ENCODE measurements at regions of chr1 and their contacts with region 1.

Region 1: GRCh38 chr1:221994274-221994698 is 252.4 kb upstream of the DUSP10 start:
- DNase-seq: no peak
- ATAC-seq: no peak
- H3K4me3 ChIP-seq: no peak overlapping the region
- H3K27ac ChIP-seq: no peak overlapping the region
- H3K4me1 ChIP-seq: no peaks in the 10 kb centered on the region
- H3K27me3 ChIP-seq: no peaks in the 10 kb centered on the region
- CTCF ChIP-seq: no peak
- EP300 ChIP-seq: no peak
- POLR2A ChIP-seq: no peak
- RAD21 ChIP-seq: no peak

Region 2: GRCh38 chr1:221478050-221478949 is 516.0 kb before region 1 on chr1:
- CTCF ChIA-PET with region 1: no interaction called
- POLR2A ChIA-PET with region 1: no interaction called
- in situ Hi-C with region 1: no loop called
- intact Hi-C with region 1: loop called (anchors 5 kb)
- DNase-seq: peak; percentile 12
- ATAC-seq: peak; percentile 92
- H3K4me3 ChIP-seq: no peak overlapping the region
- H3K27ac ChIP-seq: no peak overlapping the region
- H3K4me1 ChIP-seq: no peaks in the 10 kb centered on the region
- H3K27me3 ChIP-seq: no peaks in the 10 kb centered on the region
- CTCF ChIP-seq: peak; percentile 80
- EP300 ChIP-seq: no peak
- POLR2A ChIP-seq: no peak
- RAD21 ChIP-seq: peak; percentile 57

Region 3: GRCh38 chr1:222034790-222035189 is 40.5 kb after region 1 on chr1:
- CTCF ChIA-PET with region 1: no interaction called
- POLR2A ChIA-PET with region 1: no interaction called
- in situ Hi-C with region 1: no loop called
- intact Hi-C with region 1: loop called (anchors 1 kb)
- DNase-seq: no peak
- ATAC-seq: no peak
- H3K4me3 ChIP-seq: no peak overlapping the region
- H3K27ac ChIP-seq: no peak overlapping the region
- H3K4me1 ChIP-seq: no peaks in the 10 kb centered on the region
- H3K27me3 ChIP-seq: no peaks in the 10 kb centered on the region
- CTCF ChIP-seq: no peak
- EP300 ChIP-seq: no peak
- POLR2A ChIP-seq: no peak
- RAD21 ChIP-seq: no peak

Measured in HepG2 (cell line).